Aorta (tissue), 5 donors: ENCODE measurements at regions of chr17 and their contacts with region 1.

Region 1: GRCh38 chr17:28335201-28335955 is at the starts of genes IFT20 and TNFAIP1:
- DNase-seq: peak; percentile 99 to 100
- ATAC-seq: peak; percentile 99
- H3K4me3 ChIP-seq: peak within 1 kb of the TSS; percentile 48 to 73
- H3K27ac ChIP-seq: peak within 1 kb of the TSS; percentile 15 to 69
- H3K4me1 ChIP-seq: peaks cover 0 to 6% of the 10 kb centered on the region in 2 donors
- H3K27me3 ChIP-seq: no peaks in the 10 kb centered on the region
- total RNA-seq, gene IFT20: 34.5 to 37.2 TPM
- total RNA-seq, gene TNFAIP1: 51.1 to 68.9 TPM

Region 2: DNA sequence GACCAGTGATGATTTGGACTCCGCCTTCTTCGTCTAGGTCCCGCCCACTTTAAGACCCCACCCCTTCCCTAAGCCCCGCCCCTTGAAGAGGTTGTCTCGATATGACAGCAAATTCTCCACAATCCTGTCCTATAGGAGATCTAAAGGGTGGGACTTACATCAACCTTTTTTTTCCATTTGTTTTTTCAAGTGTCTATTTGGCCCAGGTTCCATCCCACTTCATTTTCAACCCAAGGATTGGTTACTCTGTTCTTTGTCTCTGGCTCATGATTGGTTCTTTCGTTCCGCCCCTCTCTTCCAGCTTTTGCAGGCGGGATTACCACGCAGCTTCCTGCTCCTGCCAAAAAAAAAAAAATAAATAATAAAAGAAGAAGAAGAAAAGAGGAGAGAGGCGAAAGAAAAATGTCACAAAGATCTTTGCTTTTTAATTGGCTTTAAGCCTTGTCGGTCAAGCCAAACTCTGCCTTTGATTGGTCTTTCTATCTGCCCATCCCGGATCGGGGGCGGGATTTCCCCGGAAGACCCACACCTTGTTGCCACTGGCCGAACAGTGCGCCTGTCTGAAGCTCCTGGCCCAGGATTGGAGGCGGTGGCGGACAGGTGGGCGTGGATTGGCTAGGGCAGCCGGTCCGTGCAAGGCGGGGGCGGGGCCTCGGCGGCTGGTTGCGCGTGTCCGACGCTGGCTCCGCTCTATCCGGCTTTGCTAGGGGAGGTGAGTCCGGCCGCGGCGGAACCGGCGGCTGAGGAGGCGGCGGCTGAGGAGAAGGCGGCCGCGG is 294.1 kb before region 1 on chr17:
- intact Hi-C with region 1: loop called in 1 of 2 experiments (anchors 10 kb)
- DNase-seq: peak; percentile 99 to 100
- ATAC-seq: peak; percentile 100
- H3K4me3 ChIP-seq: peak overlapping the region; percentile 86 to 92
- H3K27ac ChIP-seq: peak overlapping the region in 1 of 2 donors; percentile 48
- H3K4me1 ChIP-seq: peaks cover 0 to 9% of the 10 kb centered on the region in 2 donors
- H3K27me3 ChIP-seq: no peaks in the 10 kb centered on the region

Region 3: DNA sequence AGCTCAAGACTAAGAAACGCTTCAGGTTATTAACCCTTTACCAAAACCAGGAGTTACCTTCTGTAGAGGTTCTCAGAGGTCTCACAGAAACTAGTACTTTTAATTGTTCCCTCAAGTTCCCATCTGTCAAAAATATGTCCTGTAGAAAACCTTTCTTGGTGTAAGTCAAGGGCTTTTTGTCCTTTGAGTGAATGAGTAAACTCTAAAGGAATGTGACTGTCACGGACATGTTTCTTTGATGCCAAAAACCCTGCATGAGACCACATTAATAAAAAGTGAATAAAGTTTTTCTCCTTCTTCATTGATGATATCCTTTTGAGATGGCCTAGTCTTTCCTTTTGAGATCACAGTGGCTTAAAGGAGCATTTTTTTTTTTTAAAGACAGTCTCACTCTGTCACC is 190.0 kb before region 1 on chr17:
- intact Hi-C with region 1: no loop called
- DNase-seq: no peak
- ATAC-seq: no peak
- H3K4me3 ChIP-seq: no peak overlapping the region
- H3K27ac ChIP-seq: no peak overlapping the region
- H3K4me1 ChIP-seq: no peaks in the 10 kb centered on the region
- H3K27me3 ChIP-seq: no peaks in the 10 kb centered on the region

Region 4: DNA sequence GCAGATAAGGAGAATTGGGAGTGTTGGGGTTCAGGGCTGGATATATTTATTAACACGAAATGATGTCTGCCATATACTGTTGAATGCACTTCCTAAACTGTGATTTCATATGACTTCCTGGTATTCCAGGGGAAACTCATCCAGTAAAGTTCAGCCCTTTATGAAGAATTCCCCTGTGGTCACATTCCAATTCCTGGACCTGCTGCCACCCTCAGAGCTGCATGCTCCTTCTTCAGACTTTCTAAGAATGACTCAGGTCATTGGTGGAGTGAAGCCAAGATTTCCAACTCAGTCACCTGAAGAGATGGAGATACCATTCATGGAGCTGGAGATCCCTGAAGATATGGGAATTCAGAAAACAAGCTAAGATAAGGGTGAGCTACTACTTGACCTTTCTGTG is 130.6 kb before region 1 on chr17:
- intact Hi-C with region 1: no loop called
- DNase-seq: no peak
- ATAC-seq: no peak
- H3K4me3 ChIP-seq: no peak overlapping the region
- H3K27ac ChIP-seq: no peak overlapping the region
- H3K4me1 ChIP-seq: no peaks in the 10 kb centered on the region
- H3K27me3 ChIP-seq: no peaks in the 10 kb centered on the region

Region 5: GRCh38 chr17:28247671-28248555 is 87.5 kb before region 1 on chr17:
- intact Hi-C with region 1: no loop called
- DNase-seq: peak in 1 of 2 donors; percentile 33
- ATAC-seq: peak; percentile 13
- H3K4me3 ChIP-seq: no peak overlapping the region
- H3K27ac ChIP-seq: no peak overlapping the region
- H3K4me1 ChIP-seq: no peaks in the 10 kb centered on the region
- H3K27me3 ChIP-seq: no peaks in the 10 kb centered on the region

Region 6: GRCh38 chr17:28318759-28319660 is 16.4 kb before region 1 on chr17 and contains the start of gene TMEM97:
- intact Hi-C with region 1: loop called in 1 of 2 experiments (anchors 2 kb)
- DNase-seq: peak; percentile 96 to 98
- ATAC-seq: peak; percentile 99
- H3K4me3 ChIP-seq: peak within 1 kb of the TSS; percentile 23 to 39
- H3K27ac ChIP-seq: peak within 1 kb of the TSS in 1 of 2 donors; percentile 25
- H3K4me1 ChIP-seq: no peaks in the 10 kb centered on the region
- H3K27me3 ChIP-seq: no peaks in the 10 kb centered on the region
- total RNA-seq, gene TMEM97: 2.5 to 4.1 TPM

Region 7: DNA sequence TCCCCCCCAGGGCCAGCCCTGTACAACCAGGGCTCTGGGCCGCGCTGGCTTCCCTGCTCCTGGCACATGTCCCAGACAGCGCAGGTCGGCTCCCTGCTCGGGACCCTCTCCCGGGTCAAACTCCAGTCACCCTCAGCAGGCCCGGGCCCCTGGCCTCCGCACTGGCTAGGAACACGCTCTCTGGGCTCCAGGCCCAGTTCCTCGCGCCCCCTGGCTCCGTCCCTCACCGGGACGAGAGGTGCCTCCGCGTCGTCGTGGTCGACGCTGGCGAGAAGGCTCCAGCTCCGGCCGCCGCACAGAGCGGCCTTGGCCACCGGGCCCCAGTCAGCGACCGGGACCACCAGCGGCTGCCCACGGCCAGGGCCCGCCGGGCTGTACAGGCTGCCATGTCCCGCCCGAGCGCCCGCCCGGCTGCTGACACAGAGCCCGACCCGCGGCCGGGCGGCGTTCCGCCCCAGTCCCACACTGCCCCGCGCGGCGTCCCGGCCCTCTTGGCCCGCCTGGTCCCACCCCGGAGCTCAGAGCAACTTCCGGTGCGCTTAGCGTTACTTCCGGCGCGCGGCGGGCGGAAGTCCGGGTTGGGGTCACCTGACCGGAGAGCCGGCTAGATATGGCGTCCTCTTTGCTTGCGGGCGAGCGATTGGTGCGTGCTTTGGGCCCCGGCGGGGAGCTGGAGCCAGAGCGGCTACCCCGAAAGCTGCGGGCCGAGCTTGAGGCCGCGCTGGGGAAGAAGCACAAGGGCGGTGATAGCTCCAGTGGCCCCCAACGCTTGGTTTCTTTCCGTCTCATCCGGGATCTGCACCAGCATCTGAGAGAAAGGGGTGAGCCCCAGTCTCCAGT is 21.9 kb after region 1 on chr17 and contains the start of gene POLDIP2:
- intact Hi-C with region 1: loop called in 1 of 2 experiments (anchors 2 kb)
- DNase-seq: peak; percentile 98
- ATAC-seq: peak; percentile 99
- H3K4me3 ChIP-seq: peak within 1 kb of the TSS; percentile 86 to 91
- H3K27ac ChIP-seq: peak within 1 kb of the TSS; percentile 6 to 77
- H3K4me1 ChIP-seq: no peaks in the 10 kb centered on the region
- H3K27me3 ChIP-seq: no peaks in the 10 kb centered on the region
- total RNA-seq, gene POLDIP2: 40.1 to 42.5 TPM

Region 8: GRCh38 chr17:28385037-28385400 is 49.6 kb after region 1 on chr17:
- intact Hi-C with region 1: no loop called
- DNase-seq: peak in 1 of 2 donors; percentile 62
- ATAC-seq: no peak
- H3K4me3 ChIP-seq: no peak overlapping the region
- H3K27ac ChIP-seq: no peak overlapping the region
- H3K4me1 ChIP-seq: no peaks in the 10 kb centered on the region
- H3K27me3 ChIP-seq: no peaks in the 10 kb centered on the region